Activated CD4-positive, alpha-beta T cell treated with anti-CD3 and anti-CD28 coated beads, Interleukin-2, amount 10 ng/mL, durations not matched to agents 24 days and 14 days (primary cell): ENCODE measurements at regions of chr6 and their contacts with region 1.

Region 1: GRCh38 chr6:89242574-89243330 is 25.6 kb upstream of the GABRR1 start:
- DNase-seq: no peak
- H3K4me3 Mint-ChIP-seq: no peak overlapping the region
- H3K27ac Mint-ChIP-seq: no peak overlapping the region
- H3K4me1 Mint-ChIP-seq: peaks cover 9% of the 10 kb centered on the region
- H3K27me3 Mint-ChIP-seq: peaks cover 18% of the 10 kb centered on the region

Region 2: DNA sequence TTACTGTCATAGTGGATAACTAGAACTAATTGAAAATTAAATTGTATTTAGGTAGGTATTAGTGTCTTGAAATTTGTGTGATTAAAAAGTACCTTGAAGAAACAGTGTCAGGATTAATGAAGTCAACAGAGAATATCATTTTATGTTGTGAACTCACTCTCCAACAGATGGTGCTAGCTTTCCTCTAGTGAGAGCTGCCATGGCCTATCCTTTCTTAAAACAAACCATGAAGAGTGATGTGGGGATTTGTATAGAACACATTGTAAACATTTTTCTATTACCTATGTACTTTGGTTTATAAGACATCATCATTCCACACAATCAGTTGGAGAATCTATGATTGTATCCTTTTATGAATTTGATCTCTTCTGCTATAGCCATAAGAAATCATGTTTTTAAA is 120.1 kb before region 1 on chr6:
- intact Hi-C with region 1: loop called (anchors 5 kb)
- DNase-seq: peak; percentile 67
- H3K4me3 Mint-ChIP-seq: no peak overlapping the region
- H3K27ac Mint-ChIP-seq: no peak overlapping the region
- H3K4me1 Mint-ChIP-seq: no peaks in the 10 kb centered on the region
- H3K27me3 Mint-ChIP-seq: peaks cover 23% of the 10 kb centered on the region

Region 3: GRCh38 chr6:89154126-89154525 is 88.6 kb before region 1 on chr6:
- intact Hi-C with region 1: no loop called
- DNase-seq: no peak
- H3K4me3 Mint-ChIP-seq: no peak overlapping the region
- H3K27ac Mint-ChIP-seq: no peak overlapping the region
- H3K4me1 Mint-ChIP-seq: peaks cover 4% of the 10 kb centered on the region
- H3K27me3 Mint-ChIP-seq: no peaks in the 10 kb centered on the region